ENCODE measurements at regions of chr9 and their contacts with region 1.

Region 1: GRCh38 chr9:38707885-38708637 is 11.9 kb downstream of the FAM240B start:
- DNase-seq: no peak
- ATAC-seq: peak; percentile 79
- H3K4me3 ChIP-seq: no peak overlapping the region
- H3K27ac ChIP-seq: no peak overlapping the region
- H3K4me1 ChIP-seq: no peaks in the 10 kb centered on the region
- H3K27me3 ChIP-seq: peaks cover 12% of the 10 kb centered on the region; the same call in 1 of the 2 replicates
- CTCF ChIP-seq: peak; percentile 37 to 66 (median 55); a peak in 5 of 6 replicates
- POLR2A ChIP-seq: no peak
- RAD21 ChIP-seq: peak; percentile 56

Region 2: DNA sequence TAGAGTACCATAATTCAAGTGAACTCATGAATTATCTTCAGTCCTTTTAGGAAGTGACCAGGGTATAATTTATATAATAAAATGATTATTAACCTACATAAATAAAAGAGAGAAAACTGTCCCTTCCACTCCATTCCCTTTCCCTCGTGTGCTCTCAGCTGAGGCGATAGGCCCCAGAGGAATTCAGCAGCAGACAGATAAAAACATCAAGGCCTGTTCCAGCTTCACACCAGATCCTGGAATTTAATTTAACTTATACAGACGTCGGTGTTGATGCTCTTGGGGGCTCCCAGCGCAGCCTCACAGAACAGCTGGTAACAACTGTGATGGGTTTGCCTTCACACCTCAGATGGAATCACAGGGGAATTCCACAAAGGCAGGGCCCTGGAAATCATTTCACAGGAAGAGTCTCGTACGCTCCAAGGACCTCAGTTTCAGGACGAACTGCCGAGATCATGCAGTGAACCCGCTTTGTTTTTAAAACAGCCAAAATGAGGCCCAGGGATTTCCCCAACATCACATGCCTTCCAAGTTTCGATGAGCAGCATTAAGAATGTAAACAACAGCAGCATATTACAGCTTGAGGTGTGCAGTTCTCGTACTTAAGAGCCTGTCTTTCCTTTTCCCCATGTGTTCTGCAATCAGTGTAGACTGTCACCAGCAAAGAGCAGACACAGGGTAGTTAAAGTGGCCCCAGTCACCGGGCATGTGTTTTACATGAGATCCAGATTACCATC is 389.1 kb before region 1 on chr9:
- CTCF ChIA-PET with region 1: no interaction called
- POLR2A ChIA-PET with region 1: no interaction called
- RAD21 ChIA-PET with region 1: no interaction called
- intact Hi-C with region 1: no loop called
- DNase-seq: no peak
- ATAC-seq: no peak
- H3K4me3 ChIP-seq: no peak overlapping the region
- H3K27ac ChIP-seq: no peak overlapping the region
- H3K4me1 ChIP-seq: no peaks in the 10 kb centered on the region
- H3K27me3 ChIP-seq: 0 out of 2 replicates have a peak, but pooled peaks cover 4% of the 10 kb centered on the region
- CTCF ChIP-seq: no peak
- POLR2A ChIP-seq: no peak
- RAD21 ChIP-seq: no peak

Region 3: GRCh38 chr9:38621434-38622287 is 86.4 kb before region 1 on chr9:
- CTCF ChIA-PET with region 1: no interaction called
- POLR2A ChIA-PET with region 1: no interaction called
- RAD21 ChIA-PET with region 1: no interaction called
- intact Hi-C with region 1: no loop called
- DNase-seq: no peak
- ATAC-seq: no peak
- H3K4me3 ChIP-seq: peak overlapping the region; percentile 74 to 82
- H3K27ac ChIP-seq: peak overlapping the region; percentile 81
- H3K4me1 ChIP-seq: peaks cover 2 to 14% of the 10 kb centered on the region in 2 experiments; a peak in 2 of 4 replicates
- H3K27me3 ChIP-seq: no peaks in the 10 kb centered on the region
- CTCF ChIP-seq: no peak
- POLR2A ChIP-seq: no peak
- RAD21 ChIP-seq: no peak

Region 4: DNA sequence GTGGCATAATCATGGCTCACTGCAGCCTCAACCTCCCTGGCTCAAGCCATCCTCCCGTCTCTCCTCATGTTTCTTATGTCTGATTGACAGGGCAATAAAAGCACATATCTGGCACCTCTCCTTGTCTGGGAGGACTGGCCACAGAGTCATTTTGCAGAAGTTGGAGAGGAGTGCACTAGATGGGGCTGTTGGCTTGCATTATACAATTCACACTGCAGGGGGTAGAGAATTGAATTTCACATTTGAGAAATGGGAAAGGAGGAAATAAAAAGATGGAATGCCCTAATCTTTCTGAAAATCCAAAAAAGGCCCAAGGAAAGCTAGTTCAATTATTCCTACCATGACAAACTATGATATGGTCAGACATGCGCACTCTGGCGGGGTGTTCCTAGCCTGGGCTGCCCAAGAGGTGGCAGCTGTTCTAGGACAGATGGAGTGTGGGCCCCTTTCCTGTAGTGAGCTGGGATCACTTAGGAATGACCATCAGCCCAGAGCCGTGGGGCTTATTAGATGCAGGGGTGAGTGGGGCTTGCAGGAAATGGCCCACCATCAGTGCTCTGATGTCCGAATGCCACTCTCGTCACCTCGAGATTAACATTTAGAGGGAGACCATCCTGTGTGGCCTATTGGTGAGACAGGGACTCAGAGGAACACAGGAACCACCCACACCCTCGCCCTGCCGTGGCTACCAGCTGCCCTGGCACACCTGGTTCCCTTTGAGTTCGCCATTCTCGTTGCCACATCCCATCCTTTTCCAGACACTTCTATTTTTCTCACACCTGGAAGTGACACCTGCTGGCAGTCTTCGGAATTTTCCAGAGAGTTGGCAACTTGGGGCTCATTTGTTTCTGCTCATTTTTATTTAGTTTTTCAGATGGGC is 65.8 kb before region 1 on chr9:
- CTCF ChIA-PET with region 1: interaction called, 3 read pairs
- POLR2A ChIA-PET with region 1: no interaction called
- RAD21 ChIA-PET with region 1: interaction called in 1 of 2 experiments, 3 read pairs
- intact Hi-C with region 1: loop called (anchors 10 kb)
- DNase-seq: peak; percentile 59
- ATAC-seq: peak; percentile 85
- H3K4me3 ChIP-seq: no peak overlapping the region
- H3K27ac ChIP-seq: no peak overlapping the region
- H3K4me1 ChIP-seq: peaks cover 2 to 22% of the 10 kb centered on the region in 2 experiments; a peak in 3 of 4 replicates
- H3K27me3 ChIP-seq: no peaks in the 10 kb centered on the region
- CTCF ChIP-seq: peak; percentile 55 to 87 (median 74)
- POLR2A ChIP-seq: no peak
- RAD21 ChIP-seq: peak; percentile 92

Region 5: DNA sequence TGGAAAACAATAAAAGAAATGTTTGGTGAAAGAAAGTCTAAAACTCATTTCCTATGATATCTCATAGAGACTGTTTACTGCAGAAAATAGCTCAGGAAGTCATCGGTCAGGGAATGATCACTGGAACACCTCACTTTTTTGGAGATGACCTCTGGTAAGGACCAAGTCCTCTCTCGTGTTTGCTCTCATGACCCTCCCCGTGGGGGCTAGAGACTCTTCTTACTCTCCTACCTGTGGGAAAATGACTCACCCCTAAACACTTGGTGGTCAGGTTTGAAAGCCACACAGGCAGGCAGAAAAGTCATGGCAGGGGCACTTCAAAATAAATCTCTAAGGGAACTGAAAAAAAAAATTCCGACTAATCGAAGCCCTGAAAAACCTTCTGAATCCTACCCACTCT is 36.3 kb before region 1 on chr9:
- CTCF ChIA-PET with region 1: no interaction called
- POLR2A ChIA-PET with region 1: no interaction called
- RAD21 ChIA-PET with region 1: no interaction called
- intact Hi-C with region 1: no loop called
- DNase-seq: no peak
- ATAC-seq: no peak
- H3K4me3 ChIP-seq: peak overlapping the region in 1 of 2 experiments; percentile 48; a peak in 1 of 4 replicates
- H3K27ac ChIP-seq: no peak overlapping the region
- H3K4me1 ChIP-seq: peaks cover 17 to 21% of the 10 kb centered on the region in 2 experiments
- H3K27me3 ChIP-seq: no peaks in the 10 kb centered on the region; the same call in 1 of the 2 replicates
- CTCF ChIP-seq: no peak
- POLR2A ChIP-seq: no peak
- RAD21 ChIP-seq: no peak

Measured in HCT116 (cell line).